WTC11 (cell line): ENCODE measurements at regions of chr16 and their contacts with region 1.

Region 1: GRCh38 chr16:57795431-57795878 is 6.8 kb downstream of the KIFC3 start:
- DNase-seq: peak; percentile 74
- ATAC-seq: peak; percentile 68
- H3K4me3 Mint-ChIP-seq: no peak overlapping the region
- H3K27ac Mint-ChIP-seq: 0 out of 2 replicates have a peak overlapping the region, but pooled peaks have one; percentile 57
- H3K4me1 Mint-ChIP-seq: peaks cover 40% of the 10 kb centered on the region
- H3K27me3 Mint-ChIP-seq: peaks cover 18% of the 10 kb centered on the region
- CTCF ChIP-seq: peak; percentile 21; the same call in 1 of the 2 replicates

Region 2: GRCh38 chr16:57628008-57628781 is 167.3 kb before region 1 on chr16 and contains the start of gene ADGRG1:
- CTCF ChIA-PET with region 1: no interaction called
- POLR2A ChIA-PET with region 1: no interaction called
- DNase-seq: peak; percentile 54
- ATAC-seq: peak; percentile 64
- H3K4me3 Mint-ChIP-seq: peak within 1 kb of the TSS; percentile 49
- H3K27ac Mint-ChIP-seq: peak within 1 kb of the TSS; percentile 51; the same call in 1 of the 2 replicates
- H3K4me1 Mint-ChIP-seq: peaks cover 31% of the 10 kb centered on the region
- H3K27me3 Mint-ChIP-seq: no peaks in the 10 kb centered on the region; the same call in 1 of the 2 replicates
- CTCF ChIP-seq: no peak
- total RNA-seq, gene ADGRG1: 1.7 to 2.6 TPM (median 2.0 TPM) in 3 replicates

Region 3: DNA sequence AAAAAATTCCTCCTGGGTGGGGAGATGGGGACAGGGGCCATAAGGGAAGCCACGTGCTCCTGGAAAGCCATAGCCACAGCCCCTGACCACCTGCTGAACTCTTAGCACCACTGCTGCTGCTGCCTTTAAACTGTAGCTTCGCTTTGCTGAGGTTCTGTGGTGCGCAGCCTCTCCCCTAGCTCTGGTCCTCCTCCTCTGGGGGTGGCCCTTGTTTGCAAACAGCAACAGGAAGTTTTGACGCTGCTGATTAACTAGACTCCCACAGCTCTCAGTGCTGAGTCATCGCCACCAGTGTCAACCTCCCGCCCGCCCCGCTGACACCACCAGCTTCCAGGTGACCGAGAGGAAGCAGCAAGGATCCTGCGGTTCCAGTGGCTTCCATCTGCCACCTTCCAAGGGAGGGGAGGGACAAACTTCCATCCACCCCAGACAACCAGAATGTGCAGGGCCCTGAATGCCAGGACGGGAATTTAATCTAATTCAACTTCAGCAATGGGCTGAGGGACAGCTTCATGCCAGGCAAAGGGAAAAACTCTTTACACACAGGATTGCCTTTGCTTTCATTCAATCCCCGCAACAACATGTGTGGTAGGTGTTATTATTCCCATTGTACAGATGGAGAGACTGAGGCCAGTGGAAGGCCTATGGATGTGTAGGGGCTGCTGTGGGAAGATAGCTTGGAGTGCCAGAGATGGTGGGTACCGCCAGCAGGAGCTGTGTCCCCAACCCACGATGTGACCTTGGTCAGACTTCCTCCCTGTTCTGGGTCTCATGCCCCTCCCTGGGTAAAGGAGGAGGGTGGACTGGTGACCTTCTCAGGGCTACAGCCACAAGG is 15.0 kb after region 1 on chr16:
- CTCF ChIA-PET with region 1: interaction called, 23 read pairs
- POLR2A ChIA-PET with region 1: interaction called, 3 read pairs
- DNase-seq: peak; percentile 47
- ATAC-seq: peak; percentile 59
- H3K4me3 Mint-ChIP-seq: no peak overlapping the region
- H3K27ac Mint-ChIP-seq: peak overlapping the region; percentile 87
- H3K4me1 Mint-ChIP-seq: peaks cover 57% of the 10 kb centered on the region
- H3K27me3 Mint-ChIP-seq: peaks cover 2% of the 10 kb centered on the region; the same call in 1 of the 2 replicates
- CTCF ChIP-seq: no peak

Region 4: GRCh38 chr16:57834936-57835335 is 39.5 kb after region 1 on chr16:
- CTCF ChIA-PET with region 1: interaction called, 20 read pairs
- POLR2A ChIA-PET with region 1: no interaction called
- DNase-seq: no peak
- ATAC-seq: peak; percentile 78
- H3K4me3 Mint-ChIP-seq: no peak overlapping the region
- H3K27ac Mint-ChIP-seq: peak overlapping the region; percentile 86; the same call in 1 of the 2 replicates
- H3K4me1 Mint-ChIP-seq: peaks cover 30% of the 10 kb centered on the region
- H3K27me3 Mint-ChIP-seq: no peaks in the 10 kb centered on the region
- CTCF ChIP-seq: no peak